Posterior vena cava (tissue), 2 donors: ENCODE measurements at regions of chr7 and their contacts with region 1.

Region 1: DNA sequence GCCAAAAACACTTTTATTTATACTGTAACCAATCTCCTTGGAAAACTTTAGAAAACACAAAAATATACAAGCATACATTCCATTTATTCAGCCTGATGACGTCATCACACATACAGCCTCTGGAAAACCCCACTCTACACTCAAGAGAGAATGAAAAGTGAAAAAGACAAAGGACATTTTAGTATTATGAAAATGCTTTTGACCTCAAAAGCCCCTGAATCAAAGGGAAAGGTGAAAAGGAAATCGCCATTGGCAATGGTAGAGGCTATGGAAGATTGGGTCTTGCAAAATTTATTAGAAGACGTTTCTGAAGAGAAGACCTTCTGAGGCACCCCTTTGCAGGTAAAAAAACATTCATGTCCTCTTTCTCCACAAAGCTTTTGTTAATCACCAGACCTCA is 82.9 kb upstream of the STRIP2 start:
- DNase-seq: no peak

Region 2: DNA sequence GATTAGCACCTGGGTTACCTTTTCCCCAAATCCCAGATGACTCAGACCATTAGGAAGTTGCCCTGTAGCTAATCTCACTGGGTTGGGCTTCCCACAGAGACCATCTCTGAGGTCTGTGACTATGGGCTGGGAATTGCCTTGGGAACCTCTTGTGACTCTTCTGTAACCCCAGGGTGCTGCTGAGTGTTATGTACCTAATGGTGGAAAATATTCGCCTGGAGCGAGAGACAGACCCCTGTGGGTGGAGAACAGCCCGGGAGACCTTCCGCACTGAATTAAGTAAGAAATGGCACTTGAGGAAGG is 102.9 kb after region 1 on chr7:
- intact Hi-C with region 1: no loop called
- DNase-seq: no peak

Region 3: GRCh38 chr7:129657363-129657762 is 306.0 kb after region 1 on chr7:
- intact Hi-C with region 1: loop called in 1 of 2 experiments (anchors 5 kb)
- DNase-seq: no peak